ENCODE measurements at regions of chr1 and their contacts with region 1.

Region 1: DNA sequence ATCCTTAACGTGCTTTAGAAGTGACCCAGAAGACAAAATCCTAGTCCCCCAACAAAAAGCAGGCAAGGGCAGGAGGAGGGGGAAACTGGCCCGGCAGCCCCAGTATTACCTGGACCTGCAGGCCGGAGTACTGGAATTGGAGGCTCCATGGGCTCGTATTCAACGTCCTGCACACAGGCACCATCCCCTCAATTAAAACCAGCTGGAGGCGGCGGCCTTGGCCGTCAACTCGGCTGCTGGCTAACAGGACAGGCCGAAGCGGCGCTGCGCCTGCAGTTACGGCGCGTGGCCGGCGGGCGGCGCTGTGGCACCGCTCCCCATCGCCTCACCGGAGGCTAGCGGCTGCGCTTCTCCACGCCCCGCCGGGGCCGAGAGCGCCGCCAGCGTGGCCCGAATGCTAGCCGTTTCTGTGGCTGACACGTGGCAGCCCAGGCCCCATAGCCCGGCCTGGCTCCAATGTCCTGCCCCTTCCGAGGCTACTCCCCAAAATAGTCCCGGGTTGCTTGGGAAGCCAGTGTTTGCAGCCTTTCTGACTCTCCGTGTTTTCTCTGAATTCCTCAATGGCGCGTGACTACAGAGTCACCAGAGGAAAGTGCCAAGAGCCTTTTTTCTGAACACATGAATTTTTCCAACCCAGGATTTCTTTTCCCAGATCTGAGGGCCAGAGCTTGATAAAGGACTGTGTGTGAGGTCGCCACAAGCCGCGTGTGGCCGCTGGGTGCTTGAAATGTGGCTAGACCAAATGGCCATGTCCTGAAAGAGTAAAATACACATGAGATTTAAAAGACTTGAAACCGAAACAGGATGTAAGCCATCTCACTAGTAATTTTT is 82.5 kb downstream of the HHIPL2 start:
- DNase-seq: peak; percentile 84 to 86
- ATAC-seq: peak; percentile 96 to 98 (median 98)
- H3K4me3 ChIP-seq: peak overlapping the region; percentile 26
- H3K4me3 Mint-ChIP-seq: peak overlapping the region; percentile 83
- H3K27ac ChIP-seq: peak overlapping the region; percentile 48
- H3K27ac Mint-ChIP-seq: peak overlapping the region; percentile 80 to 84
- H3K4me1 ChIP-seq: peaks cover 10% of the 10 kb centered on the region
- H3K4me1 Mint-ChIP-seq: peaks cover 8 to 11% of the 10 kb centered on the region in 2 donors
- H3K27me3 ChIP-seq: no peaks in the 10 kb centered on the region
- H3K27me3 Mint-ChIP-seq: peaks cover 0 to 9% of the 10 kb centered on the region in 2 donors
- CTCF ChIP-seq: peak; percentile 99

Region 2: GRCh38 chr1:222557148-222557547 is 91.7 kb after region 1 on chr1:
- intact Hi-C with region 1: no loop called
- DNase-seq: no peak
- ATAC-seq: no peak
- H3K4me3 ChIP-seq: no peak overlapping the region
- H3K4me3 Mint-ChIP-seq: no peak overlapping the region
- H3K27ac ChIP-seq: no peak overlapping the region
- H3K27ac Mint-ChIP-seq: no peak overlapping the region
- H3K4me1 ChIP-seq: no peaks in the 10 kb centered on the region
- H3K4me1 Mint-ChIP-seq: no peaks in the 10 kb centered on the region
- H3K27me3 ChIP-seq: no peaks in the 10 kb centered on the region
- H3K27me3 Mint-ChIP-seq: no peaks in the 10 kb centered on the region
- CTCF ChIP-seq: no peak

Region 3: DNA sequence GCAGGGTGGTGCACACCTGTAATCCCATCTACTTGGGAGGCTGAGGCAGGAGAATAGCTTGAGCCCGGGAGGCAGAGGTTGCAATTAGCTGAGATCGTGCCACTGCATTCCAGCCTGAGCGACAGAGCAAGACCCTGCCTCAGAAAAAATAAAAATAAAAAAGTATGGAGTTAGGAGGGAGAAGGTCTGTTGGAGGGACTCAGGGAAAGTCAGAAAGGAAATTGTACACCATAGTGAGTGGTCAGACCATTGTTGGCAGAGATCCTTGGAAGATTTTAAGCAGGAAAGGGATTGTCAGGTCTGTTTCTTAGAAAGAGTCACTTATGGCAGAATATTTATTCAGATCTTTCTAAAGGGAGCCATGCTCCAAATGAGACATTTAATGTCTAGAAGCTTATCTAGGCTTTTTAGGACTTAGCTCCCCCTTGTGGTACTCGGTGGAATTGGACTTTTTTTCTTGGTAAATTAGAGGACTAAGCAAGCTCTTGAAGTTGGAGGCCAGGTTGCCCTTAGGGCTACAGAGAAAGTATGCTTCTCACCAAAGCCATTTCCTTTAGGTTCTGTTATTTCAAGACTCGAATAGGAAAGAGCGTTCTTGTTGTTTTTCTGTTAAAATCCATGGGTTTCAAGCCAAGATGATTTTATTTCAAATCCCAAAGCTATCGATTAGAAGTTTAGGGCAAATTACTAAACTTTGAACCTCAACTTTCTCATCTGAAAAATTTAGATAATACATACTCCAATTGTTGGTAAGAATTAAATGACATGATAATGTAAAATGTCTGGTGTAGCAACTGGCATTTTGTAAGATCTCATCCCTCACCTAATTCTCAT is 169.0 kb after region 1 on chr1:
- intact Hi-C with region 1: loop called (anchors 1 kb)
- DNase-seq: peak in 1 of 2 donors; percentile 90
- ATAC-seq: peak; percentile 88 to 98 (median 89)
- H3K4me3 ChIP-seq: no peak overlapping the region
- H3K4me3 Mint-ChIP-seq: no peak overlapping the region
- H3K27ac ChIP-seq: no peak overlapping the region
- H3K27ac Mint-ChIP-seq: peak overlapping the region in 1 of 2 donors; percentile 33
- H3K4me1 ChIP-seq: no peaks in the 10 kb centered on the region
- H3K4me1 Mint-ChIP-seq: peaks cover 0 to 8% of the 10 kb centered on the region in 2 donors
- H3K27me3 ChIP-seq: no peaks in the 10 kb centered on the region
- H3K27me3 Mint-ChIP-seq: no peaks in the 10 kb centered on the region
- CTCF ChIP-seq: peak; percentile 98

Region 4: GRCh38 chr1:222713091-222713961 is 247.9 kb after region 1 on chr1:
- intact Hi-C with region 1: loop called (anchors 10 kb)
- DNase-seq: peak; percentile 81 to 97
- ATAC-seq: peak; percentile 63 to 76 (median 68)
- H3K4me3 ChIP-seq: peak overlapping the region; percentile 83
- H3K4me3 Mint-ChIP-seq: peak overlapping the region; percentile 99
- H3K27ac ChIP-seq: peak overlapping the region; percentile 98
- H3K27ac Mint-ChIP-seq: peak overlapping the region; percentile 99
- H3K4me1 ChIP-seq: peaks cover 10% of the 10 kb centered on the region
- H3K4me1 Mint-ChIP-seq: peaks cover 59 to 61% of the 10 kb centered on the region in 2 donors
- H3K27me3 ChIP-seq: no peaks in the 10 kb centered on the region
- H3K27me3 Mint-ChIP-seq: no peaks in the 10 kb centered on the region
- CTCF ChIP-seq: no peak

Region 5: GRCh38 chr1:223081181-223081994 is 616.0 kb after region 1 on chr1:
- intact Hi-C with region 1: loop called (anchors 2 kb)
- DNase-seq: peak; percentile 57 to 80
- ATAC-seq: peak; percentile 74 to 96 (median 94)
- H3K4me3 ChIP-seq: peak overlapping the region; percentile 21
- H3K4me3 Mint-ChIP-seq: peak overlapping the region; percentile 72
- H3K27ac ChIP-seq: no peak overlapping the region
- H3K27ac Mint-ChIP-seq: peak overlapping the region in 1 of 2 donors; percentile 73
- H3K4me1 ChIP-seq: peaks cover 5% of the 10 kb centered on the region
- H3K4me1 Mint-ChIP-seq: peaks cover 0 to 8% of the 10 kb centered on the region in 2 donors
- H3K27me3 ChIP-seq: no peaks in the 10 kb centered on the region
- H3K27me3 Mint-ChIP-seq: peaks cover 4 to 7% of the 10 kb centered on the region in 2 donors
- CTCF ChIP-seq: peak; percentile 80

Region 6: GRCh38 chr1:223123011-223123610 is 657.7 kb after region 1 on chr1:
- intact Hi-C with region 1: loop called (anchors 1 kb)
- DNase-seq: no peak
- ATAC-seq: no peak
- H3K4me3 ChIP-seq: no peak overlapping the region
- H3K4me3 Mint-ChIP-seq: no peak overlapping the region
- H3K27ac ChIP-seq: no peak overlapping the region
- H3K27ac Mint-ChIP-seq: no peak overlapping the region
- H3K4me1 ChIP-seq: peaks cover 5% of the 10 kb centered on the region
- H3K4me1 Mint-ChIP-seq: peaks cover 8% of the 10 kb centered on the region in 2 donors
- H3K27me3 ChIP-seq: no peaks in the 10 kb centered on the region
- H3K27me3 Mint-ChIP-seq: peaks cover 11 to 12% of the 10 kb centered on the region in 2 donors
- CTCF ChIP-seq: no peak